ENCODE measurements at regions of chr7 and their contacts with region 1.

Region 1: GRCh38 chr7:45646996-45647825 is 73.0 kb downstream of the ADCY1 start:
- DNase-seq: peak in 1 of 2 donors; percentile 36
- H3K4me3 ChIP-seq: no peak overlapping the region
- H3K27ac ChIP-seq: no peak overlapping the region
- H3K4me1 ChIP-seq: no peaks in the 10 kb centered on the region
- H3K27me3 ChIP-seq: no peaks in the 10 kb centered on the region
- CTCF ChIP-seq: no peak
- POLR2A ChIP-seq: no peak

Region 2: DNA sequence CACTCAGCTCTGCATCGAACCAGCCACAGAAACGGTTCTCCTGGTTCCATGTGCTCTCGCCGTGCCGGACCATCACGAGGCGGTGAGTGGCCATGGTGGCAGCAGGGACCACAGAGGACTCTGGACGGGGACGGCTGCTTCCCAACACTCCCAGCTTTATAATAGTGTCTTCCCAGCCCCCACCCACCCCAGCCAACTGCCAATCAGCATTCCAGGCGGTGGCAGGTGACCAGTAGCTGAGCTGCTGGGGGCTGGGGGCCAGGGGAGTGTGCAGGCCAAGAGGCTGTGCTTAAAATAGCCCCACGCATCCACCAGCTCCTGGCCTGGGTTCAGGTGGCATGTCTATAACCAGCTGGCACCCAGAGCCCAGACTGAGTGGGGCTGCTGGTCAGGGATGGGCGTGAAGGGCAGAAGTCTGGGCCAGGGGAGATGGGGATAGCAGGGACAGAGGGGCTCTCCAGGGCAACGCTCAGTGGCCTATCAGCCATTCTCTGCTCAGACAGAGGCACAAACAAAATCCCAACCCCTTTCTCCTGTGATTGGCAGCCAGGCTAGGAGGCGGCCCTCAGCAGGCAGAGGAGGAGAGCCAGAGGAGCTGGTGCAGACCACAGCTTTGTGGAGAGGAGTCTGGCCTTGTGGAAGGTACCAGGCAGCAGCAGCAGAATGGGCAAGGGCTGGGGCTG is 1581.6 kb before region 1 on chr7 and contains the start of gene PGAM2:
- intact Hi-C with region 1: no loop called
- DNase-seq: peak in 1 of 2 donors; percentile 51
- H3K4me3 ChIP-seq: peak within 1 kb of the TSS in 1 of 3 donors; percentile 9
- H3K27ac ChIP-seq: no peak within 1 kb of the TSS
- H3K4me1 ChIP-seq: peaks cover 0 to 12% of the 10 kb centered on the region in 2 donors
- H3K27me3 ChIP-seq: no peaks in the 10 kb centered on the region
- CTCF ChIP-seq: no peak
- POLR2A ChIP-seq: no peak
- total RNA-seq, gene PGAM2: 0.64 to 0.73 (median 0.66) TPM

Region 3: DNA sequence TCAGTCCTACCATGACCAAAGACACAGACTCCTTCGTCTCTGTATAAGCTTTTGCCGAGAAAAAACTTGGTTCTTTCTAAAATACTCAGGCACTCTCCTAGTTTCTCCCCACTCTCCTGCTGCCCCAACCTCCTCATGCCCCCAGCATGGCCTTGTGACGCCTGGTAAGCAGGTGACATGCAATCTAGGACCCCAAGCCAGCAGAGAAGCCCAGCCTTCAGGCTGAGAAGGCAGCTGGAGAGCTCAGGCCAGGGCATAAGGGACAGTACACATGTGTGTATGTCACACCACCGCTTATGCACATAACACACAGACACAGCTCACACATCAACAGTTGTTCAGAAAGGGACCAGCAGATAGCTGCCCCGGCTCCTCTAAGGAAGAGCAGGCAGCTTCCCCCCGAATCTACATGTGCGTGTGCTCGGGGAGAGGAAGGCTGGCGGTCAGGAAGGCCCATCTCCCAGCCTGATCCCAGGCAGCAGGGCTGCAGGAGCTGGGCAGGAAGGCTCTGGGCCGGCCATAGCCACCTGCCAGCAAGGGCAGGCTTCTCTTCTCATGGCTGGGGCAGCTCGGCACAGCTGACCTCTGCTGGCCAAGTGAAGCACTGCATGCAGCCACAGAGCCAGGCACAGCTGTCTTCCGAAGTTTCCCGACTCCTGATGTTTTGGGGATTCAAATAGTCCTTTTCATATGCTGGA is 1082.0 kb before region 1 on chr7:
- intact Hi-C with region 1: loop called (anchors 10 kb)
- DNase-seq: peak; percentile 52 to 79
- H3K4me3 ChIP-seq: no peak overlapping the region
- H3K27ac ChIP-seq: no peak overlapping the region
- H3K4me1 ChIP-seq: no peaks in the 10 kb centered on the region
- H3K27me3 ChIP-seq: no peaks in the 10 kb centered on the region
- CTCF ChIP-seq: peak; percentile 88 to 95 (median 93)
- POLR2A ChIP-seq: no peak

Measured in breast epithelium (tissue), 4 donors.